PC-3 (cell line): ENCODE measurements at regions of chr11 and their contacts with region 1.

Region 1: GRCh38 chr11:128210148-128210940 is 377.0 kb downstream of the ETS1 start:
- DNase-seq: peak; percentile 100
- ATAC-seq: peak; percentile 62
- H3K4me3 ChIP-seq: peak overlapping the region; percentile 42
- H3K27ac ChIP-seq: peak overlapping the region; percentile 97
- H3K4me1 ChIP-seq: peaks cover 51% of the 10 kb centered on the region
- H3K27me3 ChIP-seq: no peaks in the 10 kb centered on the region
- CTCF ChIP-seq: no peak

Region 2: DNA sequence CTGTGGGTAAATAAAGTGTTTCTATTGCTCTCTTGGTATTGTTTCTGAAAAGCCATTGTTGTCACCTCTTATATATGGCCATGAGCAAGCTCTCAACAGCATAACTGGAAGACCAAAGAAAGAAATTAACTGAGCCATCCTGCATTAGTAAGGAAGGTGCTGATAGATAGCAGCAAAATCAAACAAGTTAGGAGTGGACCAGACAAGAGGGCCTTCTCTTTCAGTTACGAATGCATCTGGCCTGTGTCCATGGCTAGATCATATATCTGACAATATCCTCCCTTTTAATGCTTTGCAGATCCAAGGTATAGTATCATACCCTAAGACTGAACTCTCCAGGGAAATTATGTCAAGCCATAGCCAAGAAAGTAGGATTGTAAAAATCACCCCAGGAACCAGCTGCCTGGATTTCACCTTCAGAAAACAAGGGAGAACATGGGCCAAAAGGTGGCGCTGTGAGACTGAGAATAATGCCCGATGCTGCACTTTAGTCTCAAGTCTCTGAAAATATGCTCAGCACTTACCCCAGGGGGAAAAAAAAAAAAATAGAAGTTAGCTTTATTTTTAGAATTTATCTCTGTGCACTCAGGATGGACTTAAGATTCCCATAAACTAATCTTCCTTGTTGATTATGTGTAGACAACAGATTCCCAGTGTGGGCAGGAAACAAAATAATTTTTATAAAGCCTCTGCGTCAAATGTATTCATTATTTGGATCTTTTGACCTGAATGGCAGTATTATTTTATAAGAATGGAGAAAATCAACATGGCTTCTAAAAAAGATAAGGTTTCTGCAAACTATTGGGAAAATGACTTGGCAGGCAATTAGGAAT is 38.1 kb before region 1 on chr11:
- CTCF ChIA-PET with region 1: interaction called, 3 read pairs
- POLR2A ChIA-PET with region 1: no interaction called
- intact Hi-C with region 1: loop called (anchors 1 kb)
- DNase-seq: peak; percentile 95
- ATAC-seq: peak; percentile 89
- H3K4me3 ChIP-seq: no peak overlapping the region
- H3K27ac ChIP-seq: no peak overlapping the region
- H3K4me1 ChIP-seq: peaks cover 20% of the 10 kb centered on the region
- H3K27me3 ChIP-seq: no peaks in the 10 kb centered on the region
- CTCF ChIP-seq: peak; percentile 96

Region 3: DNA sequence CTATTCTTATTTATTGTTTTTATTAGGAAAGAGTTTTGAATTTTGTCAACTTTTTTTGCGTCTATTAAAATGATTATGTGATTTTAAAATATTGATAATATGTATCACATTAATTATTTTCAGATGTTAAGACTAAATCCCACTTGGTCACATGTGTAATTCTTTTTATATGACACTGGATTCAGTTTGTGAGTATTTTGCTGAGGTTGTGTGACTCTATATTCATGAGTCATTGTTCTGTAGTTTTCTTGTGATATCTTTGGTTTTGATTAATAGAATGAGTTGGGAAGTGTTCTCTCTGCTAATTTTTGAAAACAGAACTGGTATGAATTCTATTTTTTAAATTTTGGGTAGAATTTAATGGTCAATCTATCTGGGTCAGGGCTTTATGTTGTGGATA is 59.1 kb after region 1 on chr11:
- CTCF ChIA-PET with region 1: no interaction called
- POLR2A ChIA-PET with region 1: no interaction called
- intact Hi-C with region 1: no loop called
- DNase-seq: no peak
- ATAC-seq: no peak
- H3K4me3 ChIP-seq: no peak overlapping the region
- H3K27ac ChIP-seq: no peak overlapping the region
- H3K4me1 ChIP-seq: no peaks in the 10 kb centered on the region
- H3K27me3 ChIP-seq: no peaks in the 10 kb centered on the region
- CTCF ChIP-seq: no peak

Region 4: GRCh38 chr11:128279866-128280265 is 69.5 kb after region 1 on chr11:
- CTCF ChIA-PET with region 1: no interaction called
- POLR2A ChIA-PET with region 1: interaction called, 3 read pairs
- intact Hi-C with region 1: loop called (anchors 1 kb)
- DNase-seq: peak; percentile 23
- ATAC-seq: peak; percentile 83
- H3K4me3 ChIP-seq: no peak overlapping the region
- H3K27ac ChIP-seq: no peak overlapping the region
- H3K4me1 ChIP-seq: no peaks in the 10 kb centered on the region
- H3K27me3 ChIP-seq: no peaks in the 10 kb centered on the region
- CTCF ChIP-seq: no peak

Region 5: DNA sequence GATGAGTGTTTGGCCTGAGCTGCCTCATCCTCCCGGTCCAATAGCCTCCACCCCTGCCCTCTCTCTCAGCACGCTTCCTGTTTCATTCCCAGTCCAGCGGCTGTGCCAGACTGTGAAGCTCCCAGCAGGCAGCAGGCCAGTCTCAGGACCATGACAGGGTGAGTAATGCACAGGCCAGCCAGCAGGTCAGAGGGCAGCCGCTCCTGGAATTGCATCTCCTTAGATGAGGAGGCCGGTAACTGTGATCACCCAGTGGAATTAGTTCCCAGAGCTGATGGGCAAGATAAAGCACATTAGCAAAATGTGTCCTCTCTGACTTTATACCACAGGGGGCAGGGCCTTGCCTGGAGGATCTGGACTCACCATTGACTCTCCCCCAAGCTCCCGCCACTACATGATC is 125.9 kb after region 1 on chr11:
- CTCF ChIA-PET with region 1: no interaction called
- POLR2A ChIA-PET with region 1: interaction called, 7 read pairs
- intact Hi-C with region 1: loop called (anchors 1 kb)
- DNase-seq: peak; percentile 98
- ATAC-seq: peak; percentile 52
- H3K4me3 ChIP-seq: no peak overlapping the region
- H3K27ac ChIP-seq: peak overlapping the region; percentile 96
- H3K4me1 ChIP-seq: peaks cover 51% of the 10 kb centered on the region
- H3K27me3 ChIP-seq: no peaks in the 10 kb centered on the region
- CTCF ChIP-seq: no peak

Region 6: DNA sequence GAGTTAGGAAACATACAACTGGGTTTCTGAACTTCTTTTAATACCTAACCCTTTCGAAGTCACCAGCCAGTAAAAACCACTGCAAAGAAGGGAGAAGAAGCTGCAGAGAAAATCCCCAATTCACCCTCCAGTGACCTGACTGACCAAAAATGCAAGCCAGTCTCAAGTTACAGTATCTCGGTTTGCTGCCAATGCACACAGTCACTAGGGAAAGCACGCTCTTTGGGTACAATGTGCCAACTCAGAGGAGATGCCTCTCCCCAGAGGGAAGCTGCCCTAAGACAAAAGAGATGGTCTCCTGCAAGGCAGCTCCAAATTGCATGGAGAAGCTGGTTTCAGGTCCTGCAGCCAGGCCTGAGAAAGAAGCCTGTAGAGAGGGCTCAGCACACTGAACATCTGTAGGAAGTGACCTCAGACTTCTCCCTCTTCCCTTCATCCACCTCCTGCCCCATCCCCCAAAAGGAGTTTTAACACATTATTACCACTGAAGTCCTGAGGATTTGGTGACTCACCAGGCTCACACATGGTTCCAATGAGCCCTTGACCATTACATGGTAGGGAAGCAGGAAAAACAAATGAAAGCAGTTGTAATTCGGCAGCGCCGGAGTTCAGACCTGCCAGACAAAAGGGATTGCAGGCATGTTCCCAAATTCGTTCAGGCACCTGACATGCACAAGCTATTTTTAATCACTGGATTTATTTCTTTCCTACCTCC is 286.9 kb after region 1 on chr11:
- CTCF ChIA-PET with region 1: no interaction called
- POLR2A ChIA-PET with region 1: no interaction called
- intact Hi-C with region 1: loop called (anchors 1 kb)
- DNase-seq: peak; percentile 97
- ATAC-seq: peak; percentile 74
- H3K4me3 ChIP-seq: peak overlapping the region; percentile 62
- H3K27ac ChIP-seq: peak overlapping the region; percentile 91
- H3K4me1 ChIP-seq: peaks cover 97% of the 10 kb centered on the region
- H3K27me3 ChIP-seq: no peaks in the 10 kb centered on the region
- CTCF ChIP-seq: no peak

Region 7: GRCh38 chr11:129639300-129639699 is 1429.0 kb after region 1 on chr11:
- CTCF ChIA-PET with region 1: no interaction called
- POLR2A ChIA-PET with region 1: no interaction called
- intact Hi-C with region 1: loop called (anchors 5 kb)
- DNase-seq: peak; percentile 99
- ATAC-seq: peak; percentile 65
- H3K4me3 ChIP-seq: 0 out of 2 replicates have a peak overlapping the region, but pooled peaks have one; percentile 13
- H3K27ac ChIP-seq: peak overlapping the region; percentile 92
- H3K4me1 ChIP-seq: peaks cover 68% of the 10 kb centered on the region
- H3K27me3 ChIP-seq: no peaks in the 10 kb centered on the region
- CTCF ChIP-seq: no peak